ENCODE measurements at regions of chr17 and their contacts with region 1.

Region 1: GRCh38 chr17:40219073-40219860 is at the start of gene WIPF2:
- DNase-seq: peak; percentile 96
- H3K4me3 Mint-ChIP-seq: peak within 1 kb of the TSS; percentile 94
- H3K27ac Mint-ChIP-seq: peak within 1 kb of the TSS; percentile 100
- H3K4me1 Mint-ChIP-seq: peaks cover 22% of the 10 kb centered on the region
- H3K27me3 Mint-ChIP-seq: no peaks in the 10 kb centered on the region
- total RNA-seq, gene WIPF2: 26.9 and 27.2 TPM in 2 replicates

Region 2: DNA sequence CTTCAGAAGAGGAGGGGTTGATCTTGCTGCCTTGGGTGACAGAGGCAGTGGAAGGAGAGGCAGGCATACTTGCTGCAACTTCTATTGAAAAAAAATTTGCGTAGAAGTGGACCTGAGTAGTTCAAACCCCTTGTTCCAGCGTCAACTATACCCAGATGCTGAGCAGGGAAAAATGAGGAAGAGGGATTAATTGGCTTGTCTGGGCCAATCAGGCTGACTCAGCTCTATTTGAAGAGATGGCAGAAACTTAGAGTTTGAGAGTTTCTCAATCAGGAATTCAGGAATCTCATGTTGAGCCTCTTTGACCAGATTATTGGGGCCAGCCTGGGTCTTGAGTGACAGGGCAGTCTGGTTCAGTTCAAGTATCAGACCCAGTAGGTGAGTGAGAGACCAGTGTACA is 61.3 kb before region 1 on chr17:
- intact Hi-C with region 1: no loop called
- DNase-seq: no peak
- H3K4me3 Mint-ChIP-seq: no peak overlapping the region
- H3K27ac Mint-ChIP-seq: no peak overlapping the region
- H3K4me1 Mint-ChIP-seq: peaks cover 17% of the 10 kb centered on the region
- H3K27me3 Mint-ChIP-seq: no peaks in the 10 kb centered on the region

Region 3: DNA sequence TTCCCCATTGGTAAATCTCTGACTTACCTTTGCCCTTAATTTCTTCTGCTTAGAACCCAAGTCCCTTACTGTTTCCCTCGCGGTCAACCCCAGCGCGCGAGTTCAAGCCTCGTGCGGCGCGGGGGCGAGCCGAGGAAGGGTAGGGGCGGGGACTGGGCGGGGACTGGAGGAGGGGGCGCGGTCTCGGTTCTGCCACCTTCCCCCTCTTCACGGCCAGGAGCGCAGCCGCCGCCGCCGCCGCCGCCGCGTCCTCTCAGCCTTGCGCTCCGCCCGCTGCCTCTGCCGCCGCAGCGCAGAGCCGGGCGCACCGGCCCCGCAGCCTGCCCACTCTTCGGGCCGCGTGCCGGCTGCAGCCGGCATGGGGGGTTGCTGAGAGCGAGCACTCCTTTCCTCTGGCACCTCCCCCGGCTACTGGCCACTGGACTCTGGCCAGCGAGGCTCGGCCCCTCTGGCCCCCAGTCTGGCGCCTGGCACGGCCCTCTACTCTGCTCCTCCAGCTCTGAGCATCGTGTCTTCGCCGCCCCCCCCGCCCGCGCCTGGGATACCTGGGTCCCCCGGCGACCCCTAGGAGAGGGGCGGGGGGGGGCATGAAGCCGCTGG is 41.9 kb before region 1 on chr17 and contains the start of gene RAPGEFL1:
- intact Hi-C with region 1: loop called (anchors 1 kb)
- DNase-seq: peak; percentile 69
- H3K4me3 Mint-ChIP-seq: no peak within 1 kb of the TSS
- H3K27ac Mint-ChIP-seq: peak within 1 kb of the TSS; percentile 39
- H3K4me1 Mint-ChIP-seq: peaks cover 9% of the 10 kb centered on the region
- H3K27me3 Mint-ChIP-seq: no peaks in the 10 kb centered on the region
- total RNA-seq, gene RAPGEFL1: 11.6 and 12.3 TPM in 2 replicates

Region 4: DNA sequence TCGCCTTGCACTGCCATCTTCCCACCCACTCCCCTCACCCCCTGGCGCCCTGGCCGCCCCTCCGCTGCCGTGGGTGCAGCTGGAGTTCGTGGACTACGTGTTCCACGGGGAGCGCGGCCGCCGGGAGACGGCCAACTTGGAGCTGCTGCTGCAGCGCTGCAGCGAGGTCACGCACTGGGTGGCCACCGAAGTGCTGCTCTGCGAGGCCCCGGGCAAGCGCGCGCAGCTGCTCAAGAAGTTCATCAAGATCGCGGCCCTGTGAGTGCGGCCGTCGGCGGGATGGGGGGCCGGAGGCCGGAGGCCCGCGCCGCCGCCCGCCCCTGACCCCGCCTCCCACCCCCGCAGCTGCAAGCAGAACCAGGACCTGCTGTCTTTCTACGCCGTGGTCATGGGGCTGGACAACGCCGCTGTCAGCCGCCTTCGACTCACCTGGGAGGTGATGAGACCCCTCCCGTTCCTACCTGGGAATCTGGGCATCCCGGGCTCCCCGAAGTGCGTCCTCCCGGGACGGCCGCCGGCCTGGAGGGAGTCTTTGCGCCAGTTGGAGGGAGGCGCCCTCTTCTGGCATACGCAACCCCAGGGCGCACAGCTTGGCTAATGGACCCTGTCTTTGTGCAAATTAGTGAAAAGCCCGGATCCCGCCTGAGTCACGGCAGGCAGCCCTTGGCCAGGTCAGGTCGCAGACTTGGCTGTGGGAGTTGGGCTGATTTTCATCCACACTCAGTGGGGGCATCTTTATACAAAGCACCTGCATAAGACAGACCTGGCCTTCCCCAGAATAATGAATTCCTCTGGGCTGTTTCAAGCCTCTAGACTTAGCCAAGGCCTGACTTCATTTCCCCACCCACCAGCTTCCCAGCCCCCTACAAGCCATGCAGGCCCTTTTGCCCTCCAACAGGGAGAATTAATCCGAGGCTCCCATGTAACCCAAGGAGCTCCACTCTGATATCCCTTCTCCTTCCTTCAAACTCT is 27.7 kb before region 1 on chr17:
- intact Hi-C with region 1: loop called (anchors 1 kb)
- DNase-seq: peak; percentile 64
- H3K4me3 Mint-ChIP-seq: peak overlapping the region; percentile 92
- H3K27ac Mint-ChIP-seq: peak overlapping the region; percentile 79
- H3K4me1 Mint-ChIP-seq: peaks cover 14% of the 10 kb centered on the region
- H3K27me3 Mint-ChIP-seq: no peaks in the 10 kb centered on the region

Region 5: DNA sequence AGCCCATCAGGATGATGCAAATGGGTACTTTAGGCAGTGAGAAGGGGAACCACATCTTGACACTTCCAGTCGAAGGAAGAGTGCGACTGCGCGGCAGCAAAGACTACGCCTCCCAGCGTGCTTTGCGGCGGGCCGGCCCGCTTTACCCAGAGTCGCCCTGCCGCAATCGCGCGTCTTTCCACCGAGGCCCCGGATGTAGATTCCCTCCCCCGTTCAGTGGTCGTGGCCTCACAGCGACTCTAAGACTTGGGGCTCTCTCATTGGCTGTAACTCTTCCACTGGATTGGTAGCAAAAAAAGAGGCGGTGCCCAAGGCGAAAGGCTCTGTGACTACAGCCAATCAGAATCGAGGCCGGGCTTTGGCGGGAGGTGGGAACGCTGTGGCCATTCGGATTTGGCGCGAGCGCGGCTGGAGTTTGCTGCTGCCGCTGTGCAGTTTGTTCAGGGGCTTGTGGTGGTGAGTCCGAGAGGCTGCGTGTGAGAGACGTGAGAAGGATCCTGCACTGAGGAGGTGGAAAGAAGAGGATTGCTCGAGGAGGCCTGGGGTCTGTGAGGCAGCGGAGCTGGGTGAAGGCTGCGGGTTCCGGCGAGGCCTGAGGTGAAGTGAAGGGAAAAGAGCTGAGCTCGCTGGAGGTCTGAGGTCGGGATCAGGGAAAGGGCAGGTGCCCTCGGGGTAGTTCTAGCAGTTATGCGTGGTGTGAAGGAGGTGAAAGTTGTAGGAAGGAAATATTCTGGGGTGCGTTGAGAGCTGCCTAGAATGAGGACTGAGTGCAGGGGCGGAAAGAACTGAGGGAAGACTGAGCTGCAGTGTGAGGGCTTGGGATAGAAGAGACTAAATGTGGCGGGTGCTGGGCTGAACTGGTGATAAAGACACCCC is 68.5 kb after region 1 on chr17 and contains the start of gene CDC6:
- intact Hi-C with region 1: loop called (anchors 1 kb)
- DNase-seq: peak; percentile 99
- H3K4me3 Mint-ChIP-seq: peak within 1 kb of the TSS; percentile 100
- H3K27ac Mint-ChIP-seq: peak within 1 kb of the TSS; percentile 98
- H3K4me1 Mint-ChIP-seq: peaks cover 48% of the 10 kb centered on the region
- H3K27me3 Mint-ChIP-seq: no peaks in the 10 kb centered on the region
- total RNA-seq, gene CDC6: 126 and 133 TPM in 2 replicates

Measured in activated T-helper 2 cell treated with anti-CD3 and anti-CD28 coated beads, Interferon-gamma antibody, Interleukin-2, Interleukin-4, amounts not matched to agents 10 μg/mL and 5 μg/mL and 100 μg/mL, durations not matched to agents 14 hours and 24 hours and 36 hours (primary cell).